ENCODE measurements at regions of chr19 and their contacts with region 1.

Region 1: GRCh38 chr19:41218615-41219507 is at the start of gene AXL:
- DNase-seq: peak; percentile 75 to 87 (median 86)
- H3K4me3 ChIP-seq: peak within 1 kb of the TSS; percentile 97
- H3K27ac ChIP-seq: peak within 1 kb of the TSS; percentile 90 to 96
- H3K4me1 ChIP-seq: peaks cover 6% of the 10 kb centered on the region
- H3K27me3 ChIP-seq: no peaks in the 10 kb centered on the region
- CTCF ChIP-seq: no peak
- EP300 ChIP-seq: no peak
- POLR2A ChIP-seq: peak; percentile 38
- total RNA-seq, gene AXL: 24.0 to 67.7 (median 36.1) TPM

Region 2: GRCh38 chr19:41195675-41196497 is 23.0 kb before region 1 on chr19:
- intact Hi-C with region 1: no loop called
- DNase-seq: no peak
- H3K4me3 ChIP-seq: no peak overlapping the region
- H3K27ac ChIP-seq: no peak overlapping the region
- H3K4me1 ChIP-seq: no peaks in the 10 kb centered on the region
- H3K27me3 ChIP-seq: no peaks in the 10 kb centered on the region
- CTCF ChIP-seq: no peak
- EP300 ChIP-seq: no peak
- POLR2A ChIP-seq: no peak

Region 3: GRCh38 chr19:41249707-41250423 is 31.0 kb after region 1 on chr19:
- intact Hi-C with region 1: loop called in 1 of 4 experiments (anchors 5 kb)
- DNase-seq: no peak
- H3K4me3 ChIP-seq: no peak overlapping the region
- H3K27ac ChIP-seq: no peak overlapping the region
- H3K4me1 ChIP-seq: no peaks in the 10 kb centered on the region
- H3K27me3 ChIP-seq: no peaks in the 10 kb centered on the region
- CTCF ChIP-seq: no peak
- EP300 ChIP-seq: no peak
- POLR2A ChIP-seq: no peak

Measured in ovary (tissue), 10 donors.